ENCODE measurements at regions of chr6 and their contacts with region 1.

Region 1: DNA sequence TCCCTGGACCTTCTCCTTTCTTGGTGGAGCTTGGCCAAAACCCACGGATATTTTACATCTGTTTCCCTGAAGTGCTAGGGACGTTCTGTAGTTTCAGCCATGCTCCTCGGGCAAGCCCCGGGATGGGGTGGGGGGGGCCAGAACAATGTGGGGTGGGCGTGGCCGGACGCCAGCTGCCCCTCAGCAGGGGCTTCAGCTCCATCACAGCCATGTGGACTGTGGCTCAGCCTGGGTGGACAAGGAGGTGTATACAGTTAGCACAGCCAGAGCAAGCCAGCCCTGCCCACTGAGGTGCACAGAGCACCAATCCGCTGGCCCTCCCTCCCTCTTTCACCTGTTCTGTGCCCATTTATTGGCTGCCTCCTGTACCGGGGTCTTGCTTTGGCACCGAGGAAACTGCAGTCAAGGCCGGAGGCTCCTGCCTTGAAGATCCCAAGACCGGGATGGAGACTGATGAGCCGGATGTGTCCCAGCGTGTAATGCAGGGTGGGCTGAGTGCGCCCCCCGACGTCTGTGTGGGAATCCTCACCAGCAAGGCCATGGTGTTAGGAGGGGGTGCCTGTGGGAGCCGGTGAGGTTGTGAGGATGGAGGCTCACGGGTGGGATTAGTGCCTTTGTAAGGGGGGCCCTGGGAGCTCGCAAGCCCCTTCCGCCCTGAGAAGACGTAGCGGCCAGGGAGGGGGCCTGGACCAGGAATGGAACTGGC is 28.0 kb downstream of the FRMD1 start:
- DNase-seq: no peak
- ATAC-seq: no peak
- H3K4me3 ChIP-seq: no peak overlapping the region
- H3K27ac ChIP-seq: no peak overlapping the region
- H3K4me1 ChIP-seq: peaks cover 22 to 37% (median 34%) of the 10 kb centered on the region in 9 donors
- H3K27me3 ChIP-seq: no peaks in the 10 kb centered on the region
- CTCF ChIP-seq: peak in 1 of 9 donors; percentile 38

Region 2: DNA sequence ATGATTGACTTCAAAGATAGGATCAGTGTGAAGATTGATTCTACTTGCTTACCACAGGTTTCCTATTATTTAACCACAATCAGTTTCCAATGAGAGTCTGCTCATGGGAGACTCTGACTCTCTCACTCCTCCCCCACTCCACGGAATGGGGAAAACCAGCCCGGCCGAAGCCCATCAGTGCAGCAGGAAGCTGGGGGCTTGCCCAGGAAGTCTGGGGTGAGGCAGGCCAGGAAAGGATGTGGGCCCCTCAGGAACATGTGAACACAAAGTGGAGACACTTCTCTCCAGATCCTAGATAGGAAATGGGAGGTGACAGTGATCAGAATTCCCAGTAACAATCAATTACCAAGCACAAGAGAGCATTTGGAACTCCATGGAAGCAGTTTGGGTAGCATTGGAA is 581.9 kb before region 1 on chr6:
- intact Hi-C with region 1: no loop called
- DNase-seq: no peak
- ATAC-seq: no peak
- H3K4me3 ChIP-seq: no peak overlapping the region
- H3K27ac ChIP-seq: no peak overlapping the region
- H3K4me1 ChIP-seq: peaks cover 0 to 20% (median 11%) of the 10 kb centered on the region in 9 donors
- H3K27me3 ChIP-seq: no peaks in the 10 kb centered on the region
- CTCF ChIP-seq: no peak

Region 3: DNA sequence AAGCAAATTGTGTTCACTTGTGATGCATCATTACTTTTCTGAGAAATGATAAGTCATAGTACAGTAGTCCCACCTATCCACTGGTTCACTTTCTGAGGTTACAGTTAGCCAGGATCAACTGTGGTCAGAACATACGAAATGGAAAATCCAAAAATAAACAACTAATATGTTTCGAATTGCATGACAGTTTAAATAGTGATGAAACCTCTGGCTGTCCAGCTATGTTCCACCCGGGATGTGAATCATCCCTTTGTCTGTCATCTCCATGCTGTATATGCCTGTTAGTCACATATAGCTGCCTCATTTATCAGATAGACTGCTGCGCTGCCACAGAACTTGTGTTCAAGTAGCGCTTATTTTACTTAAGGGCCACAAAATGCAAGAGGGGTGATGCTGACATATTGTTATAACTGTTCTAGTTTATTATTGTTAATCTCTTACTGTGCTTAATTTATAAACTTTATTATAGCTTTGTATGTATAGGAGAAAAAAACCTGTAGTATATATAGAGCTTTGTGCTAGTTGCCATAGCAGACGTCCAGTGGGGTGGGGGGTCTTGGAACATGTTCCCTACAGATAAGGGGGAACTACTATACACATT is 195.1 kb before region 1 on chr6:
- intact Hi-C with region 1: no loop called
- DNase-seq: no peak
- ATAC-seq: peak in 4 of 8 donors; percentile 26 to 56 (median 34)
- H3K4me3 ChIP-seq: no peak overlapping the region
- H3K27ac ChIP-seq: peak overlapping the region in 1 of 10 donors; percentile 55
- H3K4me1 ChIP-seq: peaks cover 0 to 76% (median 53%) of the 10 kb centered on the region in 9 donors
- H3K27me3 ChIP-seq: no peaks in the 10 kb centered on the region
- CTCF ChIP-seq: no peak

Region 4: DNA sequence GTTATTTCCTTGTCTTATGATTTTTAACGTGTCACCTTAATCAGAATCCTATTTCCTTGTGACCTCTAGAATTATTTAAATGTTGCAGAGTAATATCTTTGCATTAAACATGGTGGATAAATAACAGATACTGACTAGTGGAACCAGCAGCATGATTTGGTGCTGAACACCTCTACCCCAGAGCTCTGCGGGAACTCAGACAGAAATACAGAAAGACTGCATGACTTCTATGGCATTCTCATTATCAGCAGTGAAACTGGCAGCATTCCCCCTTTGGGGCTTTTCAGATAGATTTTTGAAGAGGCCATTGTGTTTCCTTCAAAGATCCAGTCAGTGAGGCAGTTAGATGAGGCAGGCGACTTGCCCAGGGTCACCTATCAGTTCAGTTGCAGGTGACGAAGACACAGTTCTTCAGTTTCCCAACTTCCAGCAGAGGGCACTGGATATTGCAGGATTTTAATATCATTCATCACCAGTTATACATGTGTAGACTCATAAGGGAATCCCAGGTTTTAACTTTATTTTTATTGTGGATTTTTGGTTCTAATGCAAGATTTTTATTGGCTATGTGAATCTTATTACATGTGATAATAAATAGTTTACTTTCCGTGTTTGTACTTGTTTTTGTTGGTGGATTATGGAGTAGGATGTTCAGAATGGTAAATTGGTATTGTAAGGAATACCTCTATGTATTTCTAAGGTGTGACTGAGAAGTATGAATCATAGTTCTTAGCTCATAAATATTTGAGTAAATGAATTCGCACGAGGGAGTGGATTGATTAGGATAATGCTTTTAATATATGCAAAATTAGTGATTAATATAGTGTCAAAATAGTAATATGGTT is 143.0 kb before region 1 on chr6:
- intact Hi-C with region 1: loop called in 4 of 10 experiments (anchors 5 to 10 kb)
- DNase-seq: peak in 1 of 2 donors; percentile 27
- ATAC-seq: peak in 5 of 8 donors; percentile 55 to 85 (median 75)
- H3K4me3 ChIP-seq: no peak overlapping the region
- H3K27ac ChIP-seq: no peak overlapping the region
- H3K4me1 ChIP-seq: peaks cover 0 to 23% (median 14%) of the 10 kb centered on the region in 9 donors
- H3K27me3 ChIP-seq: no peaks in the 10 kb centered on the region
- CTCF ChIP-seq: peak in 8 of 9 donors; percentile 33 to 81 (median 67)

Region 5: DNA sequence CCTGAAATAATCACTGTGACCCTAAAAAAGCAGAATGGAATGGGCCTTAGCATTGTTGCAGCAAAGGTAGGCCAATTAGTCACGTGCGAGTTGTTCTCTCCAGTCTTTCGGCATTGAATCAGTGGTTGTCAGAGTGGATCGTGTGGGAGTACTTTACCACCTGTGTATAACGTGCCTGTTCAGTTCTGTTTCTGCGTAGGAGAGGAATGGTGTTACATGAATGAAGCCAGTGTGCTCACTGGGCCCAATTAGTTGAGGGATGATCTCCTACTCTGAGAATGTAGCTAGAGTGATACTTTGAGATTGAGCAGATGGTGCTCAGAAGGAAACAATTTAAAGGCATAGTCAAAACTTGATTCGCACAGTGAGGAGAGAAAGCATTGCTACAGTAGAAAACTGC is 126.0 kb before region 1 on chr6:
- intact Hi-C with region 1: loop called in 3 of 10 experiments (anchors 10 kb)
- DNase-seq: no peak
- ATAC-seq: peak in 4 of 8 donors; percentile 53 to 78 (median 72)
- H3K4me3 ChIP-seq: no peak overlapping the region
- H3K27ac ChIP-seq: peak overlapping the region in 1 of 10 donors; percentile 40
- H3K4me1 ChIP-seq: peaks cover 0 to 3% (median 0%) of the 10 kb centered on the region in 9 donors
- H3K27me3 ChIP-seq: no peaks in the 10 kb centered on the region
- CTCF ChIP-seq: no peak

Region 6: GRCh38 chr6:167932468-167933276 is 118.4 kb before region 1 on chr6:
- intact Hi-C with region 1: loop called in 3 of 10 experiments (anchors 10 kb)
- DNase-seq: no peak
- ATAC-seq: no peak
- H3K4me3 ChIP-seq: no peak overlapping the region
- H3K27ac ChIP-seq: peak overlapping the region in 7 of 10 donors; percentile 11 to 91 (median 81)
- H3K4me1 ChIP-seq: peaks cover 0 to 27% (median 23%) of the 10 kb centered on the region in 9 donors
- H3K27me3 ChIP-seq: no peaks in the 10 kb centered on the region
- CTCF ChIP-seq: no peak